Dorsolateral prefrontal cortex (tissue), 120 donors: ENCODE measurements at regions of chr7 and their contacts with region 1.

Region 1: GRCh38 chr7:105531792-105532671 is at the start of gene RINT1:
- DNase-seq: peak; percentile 76 to 94 (median 92)
- H3K4me3 ChIP-seq: peak within 1 kb of the TSS; percentile 67 to 100 (median 96)
- H3K27ac ChIP-seq: peak within 1 kb of the TSS in 54 of 59 donors; percentile 2 to 95 (median 82)
- H3K27me3 ChIP-seq: no peaks in the 10 kb centered on the region
- CTCF ChIP-seq: peak; percentile 24 to 97 (median 88)
- total RNA-seq, gene RINT1: 14.1 to 34.8 (median 22.7) TPM

Region 2: GRCh38 chr7:105238198-105238765 is 293.8 kb before region 1 on chr7:
- intact Hi-C with region 1: no loop called
- DNase-seq: no peak
- H3K4me3 ChIP-seq: no peak overlapping the region
- H3K27ac ChIP-seq: peak overlapping the region in 47 of 59 donors; percentile 1 to 80 (median 42)
- H3K27me3 ChIP-seq: no peaks in the 10 kb centered on the region
- CTCF ChIP-seq: no peak

Region 3: DNA sequence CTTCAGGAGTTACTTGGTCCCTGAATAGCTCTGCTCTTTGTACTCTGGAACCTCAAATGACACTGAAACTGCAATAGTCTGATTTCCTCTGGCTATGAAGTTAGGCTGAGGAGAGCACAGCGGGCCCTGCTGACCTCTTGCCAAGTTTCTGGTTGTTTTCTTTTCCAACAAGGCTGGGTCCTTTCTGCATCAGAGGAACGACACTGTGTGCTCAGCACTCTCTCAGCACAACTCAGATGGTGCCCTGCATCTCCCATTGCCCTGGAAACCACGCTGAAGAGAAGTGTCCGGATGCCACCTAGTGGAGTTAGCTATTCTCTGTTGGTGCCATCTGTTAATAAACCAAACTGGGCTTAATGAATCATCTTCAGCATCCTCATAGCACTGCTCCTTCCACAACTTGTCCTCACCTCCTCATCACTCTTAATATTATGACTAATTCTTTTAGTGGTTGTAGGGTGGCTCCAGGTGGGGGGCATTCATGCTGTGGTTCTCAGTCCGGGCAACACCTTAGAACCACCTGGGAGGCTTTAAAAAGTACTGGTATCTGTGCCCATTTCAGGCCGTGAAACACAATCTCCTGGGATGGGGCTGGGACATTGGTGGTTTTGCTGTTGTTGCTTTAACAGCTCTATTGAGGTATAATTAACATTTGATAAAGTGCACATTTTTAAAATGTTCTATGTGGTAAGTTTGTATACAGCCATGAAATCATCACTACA is 57.5 kb after region 1 on chr7:
- intact Hi-C with region 1: loop called in 1 of 2 experiments (anchors 5 kb)
- DNase-seq: peak; percentile 29 to 87 (median 78)
- H3K4me3 ChIP-seq: no peak overlapping the region
- H3K27ac ChIP-seq: peak overlapping the region in 20 of 59 donors; percentile 1 to 64 (median 38)
- H3K27me3 ChIP-seq: no peaks in the 10 kb centered on the region
- CTCF ChIP-seq: peak; percentile 31 to 86 (median 74)